Caco-2 (cell line): ENCODE measurements at regions of chr17 and their contacts with region 1.

Region 1: GRCh38 chr17:31803494-31804213 is 55.4 kb downstream of the COPRS start:
- DNase-seq: peak; percentile 71 to 73
- H3K4me3 ChIP-seq: no peak overlapping the region
- H3K4me3 Mint-ChIP-seq: peak overlapping the region; percentile 16
- H3K27ac Mint-ChIP-seq: peak overlapping the region; percentile 72
- H3K4me1 ChIP-seq: peaks cover 21% of the 10 kb centered on the region
- H3K4me1 Mint-ChIP-seq: peaks cover 8% of the 10 kb centered on the region
- H3K27me3 ChIP-seq: no peaks in the 10 kb centered on the region
- H3K27me3 Mint-ChIP-seq: no peaks in the 10 kb centered on the region
- CTCF ChIP-seq: peak in 1 of 2 experiments; percentile 13

Region 2: GRCh38 chr17:31558748-31559644 is 244.7 kb before region 1 on chr17:
- CTCF ChIA-PET with region 1: interaction called, 7 read pairs
- POLR2A ChIA-PET with region 1: interaction called, 3 read pairs
- intact Hi-C with region 1: loop called (anchors 1 kb)
- DNase-seq: peak; percentile 84 to 88
- H3K4me3 ChIP-seq: peak overlapping the region; percentile 94
- H3K4me3 Mint-ChIP-seq: peak overlapping the region; percentile 89
- H3K27ac Mint-ChIP-seq: peak overlapping the region; percentile 87
- H3K4me1 ChIP-seq: peaks cover 18% of the 10 kb centered on the region
- H3K4me1 Mint-ChIP-seq: peaks cover 19% of the 10 kb centered on the region
- H3K27me3 ChIP-seq: no peaks in the 10 kb centered on the region
- H3K27me3 Mint-ChIP-seq: no peaks in the 10 kb centered on the region
- CTCF ChIP-seq: peak; percentile 44 to 97